ENCODE measurements at regions of chr12 and their contacts with region 1.

Region 1: GRCh38 chr12:6723607-6724396 is at the start of gene COPS7A:
- DNase-seq: peak; percentile 90 to 96 (median 92)
- H3K4me3 ChIP-seq: peak within 1 kb of the TSS; percentile 77
- H3K4me3 Mint-ChIP-seq: peak within 1 kb of the TSS; percentile 84 to 91 (median 87)
- H3K27ac ChIP-seq: peak within 1 kb of the TSS; percentile 67
- H3K27ac Mint-ChIP-seq: peak within 1 kb of the TSS; percentile 90 to 100 (median 97)
- H3K4me1 ChIP-seq: peaks cover 19% of the 10 kb centered on the region
- H3K4me1 Mint-ChIP-seq: peaks cover 22 to 32% (median 23%) of the 10 kb centered on the region in 3 donors
- H3K27me3 ChIP-seq: no peaks in the 10 kb centered on the region
- H3K27me3 Mint-ChIP-seq: no peaks in the 10 kb centered on the region
- total RNA-seq, gene COPS7A: 48.8 to 49.7 TPM

Region 2: GRCh38 chr12:6734506-6735387 is 10.9 kb after region 1 on chr12:
- CTCF ChIA-PET with region 1: interaction called, 11 read pairs
- POLR2A ChIA-PET with region 1: no interaction called
- DNase-seq: no peak
- H3K4me3 ChIP-seq: no peak overlapping the region
- H3K4me3 Mint-ChIP-seq: no peak overlapping the region
- H3K27ac ChIP-seq: no peak overlapping the region
- H3K27ac Mint-ChIP-seq: peak overlapping the region in 3 of 8 donors; percentile 33 to 68 (median 54)
- H3K4me1 ChIP-seq: no peaks in the 10 kb centered on the region
- H3K4me1 Mint-ChIP-seq: peaks cover 3 to 5% (median 5%) of the 10 kb centered on the region in 3 donors
- H3K27me3 ChIP-seq: no peaks in the 10 kb centered on the region
- H3K27me3 Mint-ChIP-seq: no peaks in the 10 kb centered on the region

Region 3: GRCh38 chr12:6937481-6938297 is 213.9 kb after region 1 on chr12:
- CTCF ChIA-PET with region 1: no interaction called
- POLR2A ChIA-PET with region 1: no interaction called
- DNase-seq: peak; percentile 90 to 96 (median 93)
- H3K4me3 ChIP-seq: peak overlapping the region; percentile 86
- H3K4me3 Mint-ChIP-seq: peak overlapping the region; percentile 82 to 91 (median 85)
- H3K27ac ChIP-seq: peak overlapping the region; percentile 87
- H3K27ac Mint-ChIP-seq: peak overlapping the region; percentile 92 to 98 (median 94)
- H3K4me1 ChIP-seq: peaks cover 34% of the 10 kb centered on the region
- H3K4me1 Mint-ChIP-seq: peaks cover 27 to 49% (median 35%) of the 10 kb centered on the region in 3 donors
- H3K27me3 ChIP-seq: no peaks in the 10 kb centered on the region
- H3K27me3 Mint-ChIP-seq: peaks cover 0 to 1% of the 10 kb centered on the region in 2 donors